MCF 10A (cell line): ENCODE measurements at regions of chr1 and their contacts with region 1.

Region 1: DNA sequence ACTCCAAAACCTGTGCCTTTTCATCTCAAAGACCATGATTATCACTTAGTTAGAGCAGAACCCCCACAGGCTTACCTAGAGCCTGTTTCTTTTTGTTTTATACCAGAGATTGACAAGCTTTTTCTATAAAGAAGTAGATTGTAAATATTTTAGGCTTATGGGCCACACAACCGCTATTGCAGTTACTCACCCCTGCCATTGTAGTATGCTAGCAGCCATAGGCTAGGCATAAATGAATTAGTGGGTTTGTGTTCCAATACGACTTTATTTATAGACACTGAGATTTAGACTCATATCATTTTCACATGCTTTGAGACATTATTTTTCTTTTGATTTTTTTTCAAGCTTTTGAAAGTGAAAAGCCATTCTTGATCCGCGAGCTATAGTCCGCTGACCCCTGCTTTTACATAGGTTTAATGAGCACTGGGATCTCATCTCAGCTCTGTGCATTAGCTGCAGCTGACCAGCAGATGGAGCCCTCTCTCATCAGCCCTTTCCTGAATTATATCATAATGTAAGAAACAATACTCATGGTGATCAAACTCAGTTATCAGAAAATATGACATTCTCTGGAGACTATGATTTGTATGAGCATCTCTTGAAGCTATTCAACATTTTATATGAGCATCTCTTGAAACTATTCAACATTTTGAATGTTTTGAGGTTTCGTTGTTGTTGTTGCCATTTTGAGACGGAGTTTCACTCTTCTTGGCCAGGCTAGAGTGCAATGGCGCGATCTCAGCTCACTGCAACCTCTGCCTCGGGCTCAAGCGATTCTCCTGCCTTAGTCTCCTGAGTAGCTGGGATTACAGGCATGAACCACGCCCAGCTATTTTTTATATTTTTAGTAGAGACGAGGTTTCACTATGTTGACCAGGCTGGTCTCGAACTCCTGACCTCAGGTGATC is 111.9 kb upstream of the L1TD1 start:
- DNase-seq: peak; percentile 55
- H3K4me3 Mint-ChIP-seq: no peak overlapping the region
- H3K27ac Mint-ChIP-seq: no peak overlapping the region
- H3K4me1 Mint-ChIP-seq: no peaks in the 10 kb centered on the region
- H3K27me3 Mint-ChIP-seq: no peaks in the 10 kb centered on the region
- CTCF ChIP-seq: peak; percentile 79

Region 2: GRCh38 chr1:61828805-61829204 is 253.9 kb before region 1 on chr1:
- CTCF ChIA-PET with region 1: no interaction called
- POLR2A ChIA-PET with region 1: no interaction called
- intact Hi-C with region 1: no loop called
- DNase-seq: no peak
- H3K4me3 Mint-ChIP-seq: no peak overlapping the region
- H3K27ac Mint-ChIP-seq: no peak overlapping the region
- H3K4me1 Mint-ChIP-seq: no peaks in the 10 kb centered on the region
- H3K27me3 Mint-ChIP-seq: no peaks in the 10 kb centered on the region
- CTCF ChIP-seq: no peak

Region 3: DNA sequence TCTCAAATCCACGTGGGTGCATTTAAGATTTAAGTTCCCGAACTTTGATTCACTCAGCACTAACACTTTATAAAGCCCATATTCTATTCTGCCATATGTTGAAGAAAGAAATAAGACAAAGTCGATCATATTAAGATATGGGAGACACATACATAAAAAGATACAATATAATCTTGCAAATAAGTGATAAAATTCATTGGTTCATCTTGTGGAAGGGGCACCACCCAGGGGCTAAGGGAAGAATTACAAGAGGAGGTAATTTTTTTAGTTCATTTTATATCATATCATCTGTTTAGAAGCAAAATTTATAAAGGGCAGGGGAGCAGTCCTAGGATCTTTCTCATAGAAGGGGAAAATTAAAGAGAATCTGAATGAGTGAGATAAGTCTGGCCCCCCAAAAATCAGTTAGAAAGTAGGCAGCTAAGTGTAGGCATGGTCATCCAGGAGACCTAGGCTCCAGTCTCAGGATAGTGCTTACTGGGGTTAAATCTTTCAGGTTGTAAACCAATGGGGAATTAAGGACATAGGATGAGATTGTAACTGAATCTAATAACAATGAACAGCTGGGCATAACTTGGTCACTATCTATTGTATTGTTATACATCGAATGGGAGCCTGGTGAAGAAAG is 12.2 kb before region 1 on chr1:
- CTCF ChIA-PET with region 1: interaction called, 32 read pairs
- POLR2A ChIA-PET with region 1: no interaction called
- intact Hi-C with region 1: no loop called
- DNase-seq: peak; percentile 37
- H3K4me3 Mint-ChIP-seq: no peak overlapping the region
- H3K27ac Mint-ChIP-seq: no peak overlapping the region
- H3K4me1 Mint-ChIP-seq: no peaks in the 10 kb centered on the region
- H3K27me3 Mint-ChIP-seq: no peaks in the 10 kb centered on the region
- CTCF ChIP-seq: peak; percentile 56

Region 4: GRCh38 chr1:62111084-62111483 is 28.4 kb after region 1 on chr1:
- CTCF ChIA-PET with region 1: interaction called, 13 read pairs
- POLR2A ChIA-PET with region 1: no interaction called
- intact Hi-C with region 1: no loop called
- DNase-seq: no peak
- H3K4me3 Mint-ChIP-seq: no peak overlapping the region
- H3K27ac Mint-ChIP-seq: no peak overlapping the region
- H3K4me1 Mint-ChIP-seq: no peaks in the 10 kb centered on the region
- H3K27me3 Mint-ChIP-seq: no peaks in the 10 kb centered on the region
- CTCF ChIP-seq: no peak

Region 5: DNA sequence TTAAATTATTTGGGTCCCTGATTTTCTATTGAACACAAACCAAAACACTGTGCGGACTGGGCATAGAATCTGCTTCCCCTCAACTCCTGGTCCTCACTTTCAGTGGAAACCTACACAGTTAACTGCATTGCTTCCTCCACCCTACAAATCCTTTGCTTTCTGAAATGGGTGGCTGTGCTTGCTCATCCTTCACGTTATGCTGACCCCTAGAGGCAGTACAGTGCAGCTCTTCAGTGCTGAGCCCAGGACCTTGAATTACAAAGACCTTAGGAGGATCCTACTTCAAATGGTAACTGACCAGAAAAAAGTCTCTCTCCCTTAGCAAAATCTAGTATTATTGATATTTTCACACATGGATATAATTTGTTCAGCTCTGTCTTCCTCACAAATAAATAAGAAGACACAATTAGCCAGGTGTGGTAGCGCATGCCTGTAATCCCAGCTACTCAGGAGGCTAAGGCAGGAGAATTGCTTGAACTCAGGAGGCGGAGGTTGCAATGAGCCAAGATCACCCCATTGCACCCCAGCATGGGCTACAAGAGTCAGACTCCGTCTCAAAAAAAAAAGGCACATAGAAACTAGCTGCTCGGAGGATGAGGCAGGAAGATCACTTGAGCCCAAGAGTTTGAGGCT is 48.5 kb after region 1 on chr1:
- CTCF ChIA-PET with region 1: interaction called, 46 read pairs
- POLR2A ChIA-PET with region 1: interaction called, 4 read pairs
- intact Hi-C with region 1: loop called (anchors 1 kb)
- DNase-seq: peak; percentile 69
- H3K4me3 Mint-ChIP-seq: no peak overlapping the region
- H3K27ac Mint-ChIP-seq: no peak overlapping the region
- H3K4me1 Mint-ChIP-seq: no peaks in the 10 kb centered on the region
- H3K27me3 Mint-ChIP-seq: no peaks in the 10 kb centered on the region
- CTCF ChIP-seq: peak; percentile 73